ENCODE measurements at regions of chr3 and their contacts with region 1.

Region 1: GRCh38 chr3:124559881-124560574 is 170.2 kb upstream of the UMPS start:
- DNase-seq: peak; percentile 52
- ATAC-seq: peak; percentile 76

Region 2: GRCh38 chr3:124351430-124352148 is 208.4 kb before region 1 on chr3:
- intact Hi-C with region 1: loop called (anchors 10 kb)
- DNase-seq: no peak
- ATAC-seq: peak; percentile 73

Region 3: GRCh38 chr3:124451630-124452317 is 108.3 kb before region 1 on chr3:
- intact Hi-C with region 1: no loop called
- DNase-seq: no peak
- ATAC-seq: no peak

Region 4: DNA sequence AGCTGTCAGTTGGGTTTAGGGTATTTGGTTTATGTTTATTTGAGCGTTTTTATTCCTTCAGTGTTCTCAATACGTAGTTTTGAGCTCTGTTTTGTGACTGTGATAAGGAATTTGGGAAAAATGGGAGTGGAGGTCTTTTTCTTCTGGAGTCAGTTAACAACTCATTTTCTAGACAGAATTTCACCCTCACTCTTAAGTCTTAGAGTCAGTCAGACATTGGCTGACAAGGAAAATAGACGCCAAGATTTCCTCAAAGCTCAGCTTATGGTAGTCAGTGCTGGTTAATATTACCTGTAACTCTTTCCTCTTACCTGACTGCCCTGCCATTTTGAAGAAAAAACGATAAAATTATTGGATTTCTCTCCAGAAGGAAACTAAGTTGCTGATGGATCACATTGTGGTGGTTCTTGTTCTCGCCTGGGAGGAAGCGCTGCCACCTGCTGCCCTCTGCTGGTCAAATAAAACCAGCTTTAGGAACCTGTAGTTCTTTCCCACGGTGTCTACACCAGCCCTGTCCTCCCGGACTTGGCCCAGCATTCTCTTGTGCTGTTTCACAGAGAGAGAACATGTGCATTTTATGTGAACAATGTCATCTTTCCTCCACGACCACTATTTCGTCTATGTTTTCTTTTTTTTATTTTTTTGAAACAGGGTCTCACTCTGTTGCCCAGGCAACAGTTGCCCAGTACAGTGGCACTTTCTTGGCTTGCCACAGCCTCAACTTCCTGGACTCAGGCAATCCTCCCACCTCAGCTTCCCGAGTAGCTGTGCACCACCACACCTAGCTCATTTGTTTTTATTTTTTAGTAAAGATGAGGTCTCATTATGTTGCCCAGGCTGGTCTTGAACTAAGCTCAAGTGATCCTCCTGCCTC is 128.8 kb after region 1 on chr3:
- intact Hi-C with region 1: loop called (anchors 2 kb)
- DNase-seq: peak; percentile 76
- ATAC-seq: peak; percentile 85

Region 5: GRCh38 chr3:124878561-124879336 is 318.7 kb after region 1 on chr3:
- intact Hi-C with region 1: no loop called
- DNase-seq: no peak
- ATAC-seq: peak; percentile 79